Right ventricle myocardium inferior (tissue), 1 donor: ENCODE measurements at regions of chr2 and their contacts with region 1.

Region 1: DNA sequence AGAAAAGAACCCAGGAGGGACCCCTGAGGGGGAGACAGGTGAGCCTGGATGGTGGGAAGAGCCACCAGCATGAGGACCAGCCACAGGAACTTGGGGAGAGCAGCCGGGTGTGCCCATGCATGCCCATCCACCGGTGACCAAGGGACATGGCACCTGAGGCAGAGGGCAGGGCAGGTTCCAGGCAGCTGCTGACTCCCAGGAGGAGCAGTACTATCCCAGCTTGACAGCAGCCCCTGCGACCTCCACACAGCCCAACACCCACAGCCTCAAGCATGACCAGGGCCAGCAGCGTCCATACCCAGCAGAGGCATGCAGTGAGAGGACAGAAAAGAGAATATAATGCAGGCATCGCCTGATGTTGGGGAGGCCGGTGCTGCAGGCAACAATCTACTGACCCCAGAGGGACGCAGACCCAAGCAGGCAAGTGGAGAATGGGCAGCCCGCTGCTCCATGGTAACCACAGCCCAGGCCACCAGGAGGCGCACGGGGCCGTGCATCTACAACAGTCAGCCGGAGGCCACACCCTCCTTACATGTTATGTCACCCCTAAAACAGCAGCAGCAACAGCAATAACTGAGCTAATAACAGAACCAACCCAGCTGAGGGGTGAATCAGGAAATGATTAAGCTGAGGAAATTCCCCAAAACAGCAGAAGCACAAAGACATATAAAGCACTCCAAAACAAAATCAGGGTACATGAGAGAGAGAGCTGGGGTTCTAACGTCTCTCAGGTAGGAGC is 44.1 kb downstream of the ANKMY1 start:
- DNase-seq: peak; percentile 97
- ATAC-seq: peak; percentile 84

Region 2: GRCh38 chr2:240551809-240552208 is 38.1 kb after region 1 on chr2:
- intact Hi-C with region 1: no loop called
- DNase-seq: no peak
- ATAC-seq: no peak

Region 3: DNA sequence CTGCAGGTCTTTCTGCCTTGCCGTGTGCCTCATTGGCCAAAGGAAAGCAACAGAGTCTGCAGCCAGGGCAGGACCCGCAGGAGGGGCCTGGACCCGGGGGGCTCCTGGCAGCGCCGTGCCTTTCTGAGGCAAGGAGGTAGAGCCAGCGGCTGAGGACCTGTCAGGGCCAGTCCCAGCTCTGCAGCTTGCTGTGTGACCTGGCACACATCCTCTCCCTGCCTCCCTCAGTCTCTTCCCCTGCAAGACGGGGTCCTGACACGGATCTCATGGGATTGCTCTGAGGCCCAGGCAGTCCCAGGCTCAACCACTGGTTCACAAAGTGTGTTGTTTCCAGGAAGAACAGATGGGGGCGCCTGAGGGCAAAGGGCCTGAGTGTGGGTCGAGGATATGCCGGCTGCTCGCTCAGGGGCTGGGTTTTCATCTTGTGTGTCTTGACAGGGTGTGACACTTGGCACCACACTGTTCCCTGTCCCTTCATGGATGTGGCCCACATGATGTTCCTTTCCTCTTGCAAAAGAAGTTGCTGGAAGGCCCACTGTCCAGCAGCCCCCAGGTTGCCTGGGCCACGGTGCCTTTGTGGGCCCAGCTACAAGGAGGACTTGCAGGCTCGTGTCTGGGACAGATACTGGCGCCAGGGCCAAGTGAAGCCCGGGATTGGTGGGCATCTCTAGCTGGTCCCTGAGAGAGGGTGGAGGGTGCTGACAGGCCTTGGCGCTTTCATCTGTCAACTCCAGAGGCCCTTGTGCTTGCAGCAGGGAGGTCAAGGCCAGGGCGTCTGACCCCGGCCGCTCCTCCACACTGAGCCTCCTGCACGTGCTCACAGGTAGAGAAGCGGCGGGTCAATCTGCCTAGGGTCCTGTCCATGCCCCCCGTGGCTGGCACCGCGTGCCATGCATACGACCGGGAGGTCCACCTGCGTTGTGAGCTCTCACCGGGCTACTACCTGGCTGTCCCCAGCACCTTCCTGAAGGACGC is 82.1 kb after region 1 on chr2:
- intact Hi-C with region 1: loop called (anchors 10 kb)
- DNase-seq: peak; percentile 73
- ATAC-seq: peak; percentile 27

Region 4: GRCh38 chr2:240704651-240705050 is 190.9 kb after region 1 on chr2:
- intact Hi-C with region 1: loop called (anchors 10 kb)
- DNase-seq: peak; percentile 44
- ATAC-seq: no peak

Region 5: GRCh38 chr2:240759454-240759853 is 245.7 kb after region 1 on chr2:
- intact Hi-C with region 1: no loop called
- DNase-seq: no peak
- ATAC-seq: no peak

Region 6: DNA sequence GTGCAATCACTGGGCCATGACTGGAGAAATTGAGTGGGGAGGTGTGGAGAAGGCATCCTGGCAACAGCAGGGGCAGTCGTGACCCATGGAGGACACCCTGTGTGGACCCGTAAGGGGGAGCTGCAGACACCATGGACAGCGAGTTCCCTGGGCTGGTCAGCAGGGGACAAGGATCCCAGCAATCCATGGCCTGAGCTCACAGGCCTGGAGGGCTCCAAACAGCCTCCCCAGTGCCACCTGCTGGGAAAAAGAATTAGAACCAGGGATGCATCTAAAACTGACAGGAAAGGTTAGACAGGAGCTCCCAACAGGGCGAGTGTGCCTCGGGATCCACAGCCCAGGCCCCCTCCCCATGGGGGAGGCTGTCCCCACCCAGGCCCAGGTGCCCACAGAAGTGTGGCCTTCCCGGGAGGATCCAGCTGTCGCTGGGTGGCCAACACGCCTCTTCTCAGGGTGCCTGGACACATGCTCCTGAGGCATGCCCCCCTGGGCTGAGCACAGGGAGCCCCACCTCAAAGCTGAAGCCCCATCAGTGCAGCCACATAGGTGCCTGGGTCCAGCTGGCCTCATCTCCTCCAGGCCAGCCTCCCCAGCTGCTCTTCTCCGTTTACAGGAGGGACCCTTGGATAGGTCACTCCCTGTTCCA is 326.8 kb after region 1 on chr2:
- intact Hi-C with region 1: loop called (anchors 2 kb)
- DNase-seq: no peak
- ATAC-seq: peak; percentile 75